Heart right ventricle (tissue), 16 donors: ENCODE measurements at regions of chr13 and their contacts with region 1.

Region 1: DNA sequence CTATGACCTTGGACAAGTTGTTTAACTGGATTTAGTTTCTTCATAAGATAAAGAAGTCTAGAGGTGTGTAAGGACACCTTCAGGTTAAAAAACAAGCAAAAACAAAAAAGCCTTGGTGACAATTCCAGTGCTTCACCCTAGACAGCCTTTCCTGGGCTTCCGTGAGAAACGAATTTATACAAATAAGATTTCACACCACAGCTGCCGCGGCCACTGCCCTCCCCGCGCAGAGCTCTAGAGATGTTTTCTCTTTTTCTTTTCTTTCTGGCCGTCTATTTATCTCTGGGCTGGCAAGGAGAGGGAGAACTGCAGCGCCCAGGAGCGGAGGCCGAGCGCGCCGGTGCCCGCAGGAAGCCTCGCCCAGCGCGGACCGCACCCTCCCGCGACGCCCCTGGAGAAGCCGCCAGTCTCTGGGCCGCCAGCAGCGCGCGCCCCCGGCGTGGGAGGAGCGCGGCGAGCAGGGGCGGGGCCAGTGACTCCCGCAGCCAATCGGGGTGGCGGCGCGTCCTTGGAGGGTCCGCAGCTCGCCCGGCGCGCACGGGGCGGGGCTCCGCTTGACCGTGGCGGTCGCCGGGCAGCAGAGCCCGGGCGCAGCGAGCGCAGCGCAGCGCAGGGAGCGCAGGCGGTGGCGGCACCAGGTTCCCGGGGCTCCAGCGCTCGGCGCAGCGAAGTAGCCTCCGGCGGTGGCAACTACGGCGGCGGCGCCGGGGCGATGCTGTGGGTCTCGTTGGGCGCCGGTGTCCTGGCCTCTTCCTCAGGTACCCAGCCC is 107.0 kb downstream of the RXFP2 start:
- DNase-seq: peak; percentile 92 to 95
- ATAC-seq: peak; percentile 96 to 99 (median 98)
- H3K4me3 ChIP-seq: peak overlapping the region; percentile 61 to 92 (median 82)
- H3K27ac ChIP-seq: peak overlapping the region; percentile 73 to 93 (median 88)
- H3K4me1 ChIP-seq: peaks cover 0 to 42% (median 30%) of the 10 kb centered on the region in 9 donors
- H3K27me3 ChIP-seq: peaks cover 0 to 6% (median 0%) of the 10 kb centered on the region in 7 donors
- CTCF ChIP-seq: no peak

Region 2: DNA sequence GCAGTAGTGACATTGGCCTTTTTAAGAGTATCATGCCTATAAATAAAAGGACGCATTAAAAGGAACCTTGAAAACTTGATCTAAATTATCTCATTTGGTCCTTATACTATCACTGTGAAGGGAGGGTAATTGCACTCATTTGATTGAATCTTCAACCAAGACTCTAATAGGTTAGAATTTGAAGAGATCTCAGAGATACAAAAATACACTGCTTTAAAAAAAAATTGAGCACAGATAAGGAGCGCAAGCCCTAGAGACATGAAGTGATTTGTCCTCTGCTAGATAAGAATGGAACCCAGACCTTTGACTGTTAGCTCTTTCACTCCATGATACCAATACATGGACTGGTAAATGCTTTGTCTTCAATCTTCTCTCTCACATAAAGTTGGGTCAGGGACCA is 165.2 kb before region 1 on chr13:
- intact Hi-C with region 1: no loop called
- DNase-seq: no peak
- ATAC-seq: no peak
- H3K4me3 ChIP-seq: no peak overlapping the region
- H3K27ac ChIP-seq: no peak overlapping the region
- H3K4me1 ChIP-seq: no peaks in the 10 kb centered on the region
- H3K27me3 ChIP-seq: no peaks in the 10 kb centered on the region
- CTCF ChIP-seq: no peak

Region 3: GRCh38 chr13:31880851-31881499 is 34.6 kb after region 1 on chr13:
- intact Hi-C with region 1: loop called in 3 of 10 experiments (anchors 5 kb)
- DNase-seq: no peak
- ATAC-seq: peak in 5 of 8 donors; percentile 54 to 71 (median 64)
- H3K4me3 ChIP-seq: no peak overlapping the region
- H3K27ac ChIP-seq: peak overlapping the region in 9 of 10 donors; percentile 8 to 73 (median 52)
- H3K4me1 ChIP-seq: peaks cover 13 to 82% (median 60%) of the 10 kb centered on the region in 9 donors
- H3K27me3 ChIP-seq: no peaks in the 10 kb centered on the region
- CTCF ChIP-seq: no peak

Region 4: GRCh38 chr13:31896427-31896826 is 50.1 kb after region 1 on chr13:
- intact Hi-C with region 1: loop called in 5 of 10 experiments (anchors 5 to 10 kb)
- DNase-seq: peak; percentile 19 to 41
- ATAC-seq: peak; percentile 16 to 91 (median 78)
- H3K4me3 ChIP-seq: no peak overlapping the region
- H3K27ac ChIP-seq: peak overlapping the region; percentile 45 to 91 (median 72)
- H3K4me1 ChIP-seq: peaks cover 23 to 83% (median 66%) of the 10 kb centered on the region in 9 donors
- H3K27me3 ChIP-seq: no peaks in the 10 kb centered on the region
- CTCF ChIP-seq: no peak

Region 5: DNA sequence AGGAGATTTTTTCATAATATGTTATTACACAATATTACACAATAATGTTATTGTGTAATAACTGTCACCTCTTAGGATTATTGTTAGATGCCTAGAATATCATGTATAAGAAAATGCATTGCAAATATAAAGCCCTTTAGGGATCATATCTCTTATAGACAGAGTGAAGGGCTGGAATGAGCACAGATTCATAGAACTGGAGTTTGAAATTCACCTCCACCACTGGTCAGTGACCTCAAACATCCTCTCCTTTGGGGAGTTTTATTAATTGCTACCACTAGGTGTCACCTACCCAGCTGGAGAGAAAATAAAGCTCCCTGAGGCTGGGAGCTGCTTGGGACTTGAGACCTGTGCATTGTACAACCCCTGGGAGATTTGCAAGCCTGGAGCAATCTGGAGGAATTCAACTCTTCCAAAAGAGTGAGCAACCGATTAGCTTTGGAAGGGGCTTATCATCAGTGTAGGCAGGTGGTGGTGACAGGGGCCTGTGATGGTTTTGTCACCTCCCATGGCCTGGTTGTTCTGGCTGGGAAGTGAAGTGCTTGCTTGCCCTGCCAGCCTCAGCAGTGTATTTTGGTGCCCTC is 154.9 kb after region 1 on chr13:
- intact Hi-C with region 1: loop called in 1 of 10 experiments (anchors 10 kb)
- DNase-seq: peak; percentile 24 to 58
- ATAC-seq: peak; percentile 71 to 95 (median 90)
- H3K4me3 ChIP-seq: no peak overlapping the region
- H3K27ac ChIP-seq: peak overlapping the region in 7 of 10 donors; percentile 6 to 47 (median 34)
- H3K4me1 ChIP-seq: peaks cover 3 to 59% (median 30%) of the 10 kb centered on the region in 9 donors
- H3K27me3 ChIP-seq: no peaks in the 10 kb centered on the region
- CTCF ChIP-seq: peak in 8 of 9 donors; percentile 38 to 71 (median 61)